Activated CD4-positive, alpha-beta T cell treated with anti-CD3 and anti-CD28 coated beads, Interleukin-2, amount 10 ng/mL, durations not matched to agents 24 days and 14 days (primary cell): ENCODE measurements at regions of chr9 and their contacts with region 1.

Region 1: DNA sequence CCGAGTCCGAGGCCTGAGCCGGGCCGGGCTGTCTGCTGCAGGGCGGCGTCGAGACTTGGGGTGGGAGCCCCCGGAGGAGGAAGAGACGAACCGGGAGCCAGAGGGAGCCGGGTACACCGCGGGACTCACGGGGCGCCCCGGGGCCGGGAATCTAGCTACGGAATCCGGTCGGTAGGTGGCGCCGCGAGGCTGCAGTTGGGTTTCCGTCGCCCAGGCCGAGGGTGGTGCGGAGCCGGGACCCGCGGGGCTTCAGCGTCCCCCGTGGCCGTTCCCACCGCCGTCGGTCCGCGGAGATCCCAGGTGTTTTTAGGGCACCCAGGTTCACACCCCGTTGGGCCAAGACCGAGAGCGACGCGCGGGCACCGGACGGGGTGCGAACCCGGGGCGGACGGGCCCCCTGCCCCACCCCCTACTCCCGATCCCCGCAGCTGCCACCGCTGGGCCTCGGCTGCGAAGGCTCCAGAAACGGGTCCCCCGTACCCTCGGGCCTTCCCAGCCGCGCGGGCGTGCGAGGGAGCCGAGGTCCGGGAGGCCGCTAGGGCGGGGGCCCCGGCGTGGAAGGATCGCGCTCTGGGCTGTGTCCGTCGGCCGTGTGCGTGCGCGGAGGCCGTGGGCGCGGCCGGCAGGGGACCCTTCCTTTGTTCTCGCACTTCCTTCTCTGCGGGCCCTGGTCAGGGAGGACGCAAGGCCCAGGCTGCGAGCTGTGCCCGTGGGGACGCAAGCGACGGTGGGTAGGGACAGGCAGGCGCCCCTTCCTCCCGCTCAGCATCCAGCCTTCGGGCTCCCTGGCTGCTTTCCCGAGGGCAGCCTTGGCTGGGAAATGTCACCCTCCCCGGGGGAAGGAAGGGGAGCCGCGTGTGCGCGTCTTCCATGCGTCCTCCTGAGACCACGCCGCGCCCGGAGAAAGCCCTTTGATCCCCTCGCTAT is 146.6 kb downstream of the GAPVD1 start:
- DNase-seq: peak; percentile 93
- H3K4me3 Mint-ChIP-seq: peak overlapping the region; percentile 80
- H3K27ac Mint-ChIP-seq: no peak overlapping the region
- H3K4me1 Mint-ChIP-seq: peaks cover 10% of the 10 kb centered on the region
- H3K27me3 Mint-ChIP-seq: peaks cover 14% of the 10 kb centered on the region

Region 2: GRCh38 chr9:125706661-125707471 is 298.6 kb after region 1 on chr9 and contains the start of gene MAPKAP1:
- intact Hi-C with region 1: loop called (anchors 10 kb)
- DNase-seq: peak; percentile 98
- H3K4me3 Mint-ChIP-seq: peak within 1 kb of the TSS; percentile 89
- H3K27ac Mint-ChIP-seq: peak within 1 kb of the TSS; percentile 83
- H3K4me1 Mint-ChIP-seq: peaks cover 35% of the 10 kb centered on the region
- H3K27me3 Mint-ChIP-seq: peaks cover 2% of the 10 kb centered on the region
- total RNA-seq, gene MAPKAP1: 104 and 123 TPM in 2 replicates

Region 3: GRCh38 chr9:126183266-126183665 is 775.0 kb after region 1 on chr9:
- intact Hi-C with region 1: no loop called
- DNase-seq: no peak
- H3K4me3 Mint-ChIP-seq: no peak overlapping the region
- H3K27ac Mint-ChIP-seq: no peak overlapping the region
- H3K4me1 Mint-ChIP-seq: no peaks in the 10 kb centered on the region
- H3K27me3 Mint-ChIP-seq: peaks cover 37% of the 10 kb centered on the region

Region 4: DNA sequence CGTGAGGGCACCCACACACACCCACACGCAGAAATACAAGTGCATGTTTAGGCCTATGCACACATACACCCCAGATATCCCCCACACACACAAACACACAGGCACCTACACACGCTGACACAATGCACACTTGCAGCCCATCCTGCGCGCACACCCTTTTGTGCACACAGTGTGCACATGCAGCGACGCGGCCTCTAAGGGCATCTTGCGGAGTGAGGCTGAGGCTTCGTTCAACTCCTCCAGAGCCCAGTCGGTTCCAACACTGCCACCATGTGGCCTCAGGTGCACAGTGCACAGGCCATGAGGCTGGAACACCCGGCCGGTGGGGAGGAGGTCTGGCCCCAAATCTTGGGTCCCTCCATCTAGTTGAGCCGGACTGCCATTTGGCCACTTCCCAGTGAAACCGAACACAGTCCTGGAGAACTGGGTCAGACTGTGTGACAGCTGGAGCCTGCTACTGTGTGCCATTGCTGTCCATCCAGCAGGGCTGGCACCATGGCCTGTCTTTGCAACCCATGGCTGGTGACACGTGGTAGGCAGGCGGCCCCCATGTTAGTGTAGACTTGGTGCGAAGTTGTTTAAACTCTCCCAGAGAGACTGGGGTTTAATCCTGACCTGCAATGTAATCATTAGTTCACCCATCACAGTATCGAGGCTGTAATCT is 820.7 kb after region 1 on chr9:
- intact Hi-C with region 1: loop called (anchors 1 kb)
- DNase-seq: peak; percentile 90
- H3K4me3 Mint-ChIP-seq: no peak overlapping the region
- H3K27ac Mint-ChIP-seq: no peak overlapping the region
- H3K4me1 Mint-ChIP-seq: peaks cover 3% of the 10 kb centered on the region
- H3K27me3 Mint-ChIP-seq: peaks cover 24% of the 10 kb centered on the region